Body of pancreas (tissue), 4 donors: ENCODE measurements at regions of chr7 and their contacts with region 1.

Region 1: GRCh38 chr7:5450549-5451372 is 27.1 kb upstream of the TNRC18 start:
- DNase-seq: peak; percentile 53 to 69 (median 56)
- ATAC-seq: peak; percentile 62
- H3K4me3 ChIP-seq: no peak overlapping the region
- H3K27ac ChIP-seq: no peak overlapping the region
- H3K4me1 ChIP-seq: peaks cover 6% of the 10 kb centered on the region
- H3K27me3 ChIP-seq: no peaks in the 10 kb centered on the region
- CTCF ChIP-seq: peak; percentile 41 to 78 (median 59)
- POLR2A ChIP-seq: no peak

Region 2: GRCh38 chr7:4681886-4682620 is 768.7 kb before region 1 on chr7 and contains the start of gene FOXK1:
- intact Hi-C with region 1: no loop called
- DNase-seq: peak; percentile 74 to 78 (median 76)
- ATAC-seq: peak; percentile 88
- H3K4me3 ChIP-seq: peak within 1 kb of the TSS; percentile 68 to 74
- H3K27ac ChIP-seq: peak within 1 kb of the TSS; percentile 63 to 87 (median 77)
- H3K4me1 ChIP-seq: peaks cover 34% of the 10 kb centered on the region
- H3K27me3 ChIP-seq: no peaks in the 10 kb centered on the region
- CTCF ChIP-seq: peak in 1 of 7 experiments; percentile 29
- POLR2A ChIP-seq: peak; percentile 22 to 60 (median 53)
- total RNA-seq, gene FOXK1: 16.2 to 17.6 TPM

Region 3: GRCh38 chr7:5248201-5248885 is 202.4 kb before region 1 on chr7:
- intact Hi-C with region 1: loop called (anchors 10 kb)
- DNase-seq: peak in 3 of 4 donors; percentile 33 to 42 (median 42)
- ATAC-seq: peak; percentile 53
- H3K4me3 ChIP-seq: no peak overlapping the region
- H3K27ac ChIP-seq: no peak overlapping the region
- H3K4me1 ChIP-seq: no peaks in the 10 kb centered on the region
- H3K27me3 ChIP-seq: no peaks in the 10 kb centered on the region
- CTCF ChIP-seq: no peak
- POLR2A ChIP-seq: no peak

Region 4: GRCh38 chr7:5363729-5364128 is 87.0 kb before region 1 on chr7:
- intact Hi-C with region 1: loop called (anchors 5 kb)
- DNase-seq: no peak
- ATAC-seq: no peak
- H3K4me3 ChIP-seq: no peak overlapping the region
- H3K27ac ChIP-seq: no peak overlapping the region
- H3K4me1 ChIP-seq: no peaks in the 10 kb centered on the region
- H3K27me3 ChIP-seq: no peaks in the 10 kb centered on the region
- CTCF ChIP-seq: no peak
- POLR2A ChIP-seq: no peak

Region 5: GRCh38 chr7:5382281-5382892 is 68.4 kb before region 1 on chr7:
- intact Hi-C with region 1: no loop called
- DNase-seq: peak in 3 of 4 donors; percentile 39 to 46 (median 44)
- ATAC-seq: no peak
- H3K4me3 ChIP-seq: no peak overlapping the region
- H3K27ac ChIP-seq: peak overlapping the region in 1 of 4 donors; percentile 24
- H3K4me1 ChIP-seq: peaks cover 49% of the 10 kb centered on the region
- H3K27me3 ChIP-seq: no peaks in the 10 kb centered on the region
- CTCF ChIP-seq: no peak
- POLR2A ChIP-seq: no peak

Region 6: GRCh38 chr7:5709347-5709950 is 258.7 kb after region 1 on chr7:
- intact Hi-C with region 1: no loop called
- DNase-seq: no peak
- ATAC-seq: no peak
- H3K4me3 ChIP-seq: no peak overlapping the region
- H3K27ac ChIP-seq: no peak overlapping the region
- H3K4me1 ChIP-seq: no peaks in the 10 kb centered on the region
- H3K27me3 ChIP-seq: no peaks in the 10 kb centered on the region
- CTCF ChIP-seq: no peak
- POLR2A ChIP-seq: no peak